ENCODE measurements at regions of chr20 and their contacts with region 1.

Region 1: GRCh38 chr20:59032023-59032712 is at the start of gene ATP5F1E:
- DNase-seq: peak; percentile 92 to 98 (median 97)
- H3K4me3 ChIP-seq: peak within 1 kb of the TSS; percentile 60 to 97 (median 85)
- H3K27ac ChIP-seq: peak within 1 kb of the TSS; percentile 68 to 98 (median 92)
- H3K27me3 ChIP-seq: no peaks in the 10 kb centered on the region
- CTCF ChIP-seq: peak in 15 of 56 donors; percentile 4 to 43 (median 15)
- total RNA-seq, gene ATP5F1E: 31.5 to 78.6 (median 49.1) TPM

Region 2: DNA sequence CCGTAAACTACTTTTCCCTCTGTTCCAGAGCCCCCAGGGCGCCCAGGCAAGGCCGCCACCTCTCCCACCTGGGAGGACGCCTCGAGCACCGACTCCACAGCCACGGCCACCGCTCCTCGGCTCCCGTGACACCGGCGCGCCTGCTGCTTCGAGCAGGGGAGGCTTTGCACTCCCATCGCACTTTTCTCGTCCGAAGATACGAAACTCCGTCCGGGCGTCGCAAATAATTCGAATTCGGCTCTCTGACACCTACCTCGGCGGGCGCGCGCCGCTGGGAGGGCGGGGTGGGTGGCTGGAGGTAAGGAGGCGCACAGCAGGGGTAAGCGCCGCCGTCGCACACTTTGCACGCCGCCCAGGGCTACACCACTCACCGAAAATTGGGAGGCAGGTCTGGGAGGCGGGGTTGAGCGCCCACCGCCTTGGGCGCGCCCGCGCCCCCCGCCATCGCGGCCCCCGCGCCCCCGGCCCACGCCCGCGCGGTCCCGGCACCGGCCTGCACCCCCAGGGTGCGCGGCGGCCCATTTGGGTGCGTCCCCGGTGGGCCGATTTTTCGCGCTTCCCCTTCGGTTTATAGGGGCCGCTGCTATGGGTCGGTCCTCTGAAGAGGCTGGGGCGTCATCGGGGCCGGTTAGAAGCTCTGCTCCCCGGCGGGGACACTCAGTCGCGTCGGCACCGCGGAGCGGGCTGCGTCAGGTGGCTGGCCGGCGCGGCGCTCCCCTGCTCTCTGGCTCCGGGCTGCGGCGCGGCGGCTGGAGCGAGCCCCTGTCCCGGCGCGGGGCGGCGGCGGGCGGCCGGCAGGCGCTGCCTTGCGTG is 143.4 kb before region 1 on chr20:
- intact Hi-C with region 1: loop called in 1 of 2 experiments (anchors 1 kb)
- DNase-seq: peak; percentile 45 to 86 (median 74)
- H3K4me3 ChIP-seq: peak overlapping the region; percentile 23 to 85 (median 67)
- H3K27ac ChIP-seq: peak overlapping the region in 26 of 59 donors; percentile 2 to 99 (median 78)
- H3K27me3 ChIP-seq: no peaks in the 10 kb centered on the region
- CTCF ChIP-seq: no peak

Region 3: GRCh38 chr20:58911970-58912369 is 120.2 kb before region 1 on chr20:
- intact Hi-C with region 1: no loop called
- DNase-seq: no peak
- H3K4me3 ChIP-seq: no peak overlapping the region
- H3K27ac ChIP-seq: no peak overlapping the region
- H3K27me3 ChIP-seq: no peaks in the 10 kb centered on the region
- CTCF ChIP-seq: no peak

Region 4: DNA sequence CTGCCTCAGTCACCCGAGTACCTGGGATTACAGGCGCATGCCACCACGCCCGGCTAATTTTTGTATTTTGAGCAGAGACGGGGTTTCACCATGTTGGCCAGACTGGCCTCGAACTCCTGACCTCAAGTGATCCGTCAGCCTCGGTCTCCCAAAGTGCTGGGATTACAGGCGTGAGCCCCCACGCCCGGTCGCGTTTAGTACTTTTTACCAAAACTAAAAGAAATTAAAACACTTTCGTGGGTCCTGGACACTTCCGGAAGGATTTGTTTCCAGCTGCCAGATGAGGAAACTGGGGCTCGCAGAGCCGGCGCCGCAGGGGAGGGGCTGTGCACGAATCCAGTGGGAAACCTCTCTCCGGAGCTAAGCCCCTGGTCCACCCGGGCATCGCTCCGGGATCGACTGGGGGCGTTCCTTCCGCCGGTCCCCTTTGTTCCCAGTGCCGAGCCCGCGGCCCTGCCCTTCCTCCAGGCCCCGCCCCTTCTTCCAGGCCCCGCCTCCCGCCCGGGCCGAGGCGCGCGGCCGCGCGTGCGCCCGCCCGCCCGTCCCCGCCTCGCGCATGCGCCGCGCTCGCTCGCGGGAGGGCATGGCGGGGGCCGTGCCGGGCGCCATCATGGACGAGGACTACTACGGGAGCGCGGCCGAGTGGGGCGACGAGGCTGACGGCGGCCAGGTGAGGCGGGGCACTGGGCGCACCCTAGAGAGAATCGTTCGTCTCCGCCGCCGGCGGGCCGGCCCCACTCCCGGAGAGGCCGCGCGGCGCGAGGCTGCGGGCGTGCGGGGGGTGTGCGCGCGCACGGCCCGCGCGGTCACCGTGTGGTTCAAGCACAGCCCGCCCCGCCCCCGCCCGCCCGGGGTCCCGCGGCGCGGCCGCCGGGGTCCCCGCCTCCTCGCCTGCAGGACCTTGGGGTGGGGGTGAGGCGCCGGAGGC is 51.2 kb before region 1 on chr20 and contains the start of gene NELFCD:
- intact Hi-C with region 1: loop called in 1 of 2 experiments (anchors 2 kb)
- DNase-seq: peak; percentile 56 to 87 (median 72)
- H3K4me3 ChIP-seq: peak within 1 kb of the TSS; percentile 57 to 92 (median 77)
- H3K27ac ChIP-seq: peak within 1 kb of the TSS in 58 of 59 donors; percentile 14 to 94 (median 82)
- H3K27me3 ChIP-seq: no peaks in the 10 kb centered on the region
- CTCF ChIP-seq: peak in 2 of 56 donors; percentile 7 to 9
- total RNA-seq, gene NELFCD: 46.8 to 90.1 (median 64.8) TPM

Region 5: GRCh38 chr20:59087829-59088433 is 55.8 kb after region 1 on chr20:
- intact Hi-C with region 1: no loop called
- DNase-seq: peak; percentile 72 to 89 (median 84)
- H3K4me3 ChIP-seq: no peak overlapping the region
- H3K27ac ChIP-seq: no peak overlapping the region
- H3K27me3 ChIP-seq: peaks cover 0 to 5% (median 0%) of the 10 kb centered on the region in 45 donors
- CTCF ChIP-seq: peak; percentile 81 to 100 (median 96)

Region 6: GRCh38 chr20:59104831-59105230 is 72.7 kb after region 1 on chr20:
- intact Hi-C with region 1: no loop called
- DNase-seq: no peak
- H3K4me3 ChIP-seq: no peak overlapping the region
- H3K27ac ChIP-seq: no peak overlapping the region
- H3K27me3 ChIP-seq: peaks cover 0 to 4% (median 0%) of the 10 kb centered on the region in 45 donors
- CTCF ChIP-seq: no peak

Measured in dorsolateral prefrontal cortex (tissue), 120 donors.